ENCODE measurements at regions of chr2 and their contacts with region 1.

Region 1: DNA sequence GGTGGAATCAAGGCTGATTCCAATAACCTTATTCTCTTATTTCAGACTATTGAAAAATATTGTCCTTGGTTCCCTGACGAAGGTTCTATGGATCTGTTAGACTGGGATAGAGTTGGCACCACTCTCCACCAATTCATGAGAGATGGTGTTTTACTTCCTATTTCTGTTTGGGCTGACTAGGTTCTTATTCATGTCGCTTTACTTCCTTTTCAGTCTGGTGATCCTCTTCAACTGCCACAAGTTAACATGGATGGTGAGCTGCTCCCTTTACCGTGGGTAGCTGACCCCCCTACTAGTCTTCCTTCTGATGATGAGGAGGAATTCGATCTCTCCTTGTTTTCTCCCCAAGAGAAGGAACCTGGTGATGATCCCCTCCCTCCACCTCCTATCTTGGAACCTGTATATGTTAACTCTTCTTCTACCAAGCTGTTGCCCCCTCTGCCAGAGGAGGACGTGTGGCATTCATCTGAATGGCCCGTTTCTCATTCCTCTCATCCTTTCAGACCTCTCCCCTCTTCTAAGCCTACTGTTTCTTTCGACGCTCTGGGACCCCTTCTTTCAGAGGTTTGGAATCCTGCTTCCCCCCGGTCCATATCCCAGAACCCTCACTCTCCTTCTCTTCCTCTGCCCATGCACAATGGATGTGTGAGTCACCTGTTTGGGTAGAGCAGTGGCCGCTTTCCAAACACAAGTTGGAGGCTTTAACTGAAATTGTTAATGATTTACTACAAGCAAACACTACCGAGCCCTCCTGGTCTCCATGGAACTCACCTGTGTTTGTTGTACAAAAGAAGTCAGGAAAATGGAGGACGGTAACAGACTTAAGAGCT is 13.5 kb upstream of the CNOT11 start:
- DNase-seq: no peak
- H3K4me3 ChIP-seq: no peak overlapping the region
- CTCF ChIP-seq: no peak

Region 2: DNA sequence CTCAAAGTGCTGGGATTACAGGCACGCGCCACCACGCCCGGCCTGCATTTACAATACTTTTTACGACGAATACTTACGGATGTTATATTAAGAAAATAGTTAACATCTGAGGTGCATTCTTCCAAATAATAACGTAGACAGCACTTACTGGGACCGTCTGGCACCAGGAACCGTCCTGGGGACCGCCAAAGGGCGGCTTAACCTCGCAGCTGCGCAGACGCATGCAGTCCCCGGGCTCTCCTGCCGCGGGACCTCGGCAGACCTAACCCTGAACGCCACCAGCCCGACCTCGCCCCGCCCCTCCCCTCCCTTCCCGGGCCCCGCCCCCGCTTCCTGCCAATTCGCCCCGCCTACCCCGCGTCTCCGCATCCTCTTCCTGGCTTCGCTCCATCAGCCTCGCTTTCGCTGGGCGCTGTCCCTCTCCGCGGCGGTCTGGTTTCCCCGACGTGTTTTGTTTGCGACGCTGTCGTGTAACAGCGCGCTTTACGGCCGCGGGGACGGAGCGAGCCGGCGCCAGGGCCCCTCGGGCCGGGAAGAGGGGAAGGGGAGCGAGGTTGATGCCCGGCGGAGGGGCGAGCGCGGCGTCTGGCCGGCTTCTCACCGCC is 13.4 kb after region 1 on chr2 and contains the start of gene CNOT11:
- CTCF ChIA-PET with region 1: interaction called, 15 read pairs
- POLR2A ChIA-PET with region 1: no interaction called
- DNase-seq: peak; percentile 77
- H3K4me3 ChIP-seq: peak within 1 kb of the TSS; percentile 93
- CTCF ChIP-seq: no peak

Measured in AG04449 (cell line).